T-cell (primary cell): ENCODE measurements at regions of chr9 and their contacts with region 1.

Region 1: GRCh38 chr9:125308683-125309082 is 47.1 kb downstream of the GAPVD1 start:
- DNase-seq: no peak
- ATAC-seq: no peak
- H3K4me3 ChIP-seq: no peak overlapping the region
- H3K4me3 Mint-ChIP-seq: no peak overlapping the region
- H3K27ac ChIP-seq: no peak overlapping the region
- H3K27ac Mint-ChIP-seq: no peak overlapping the region
- H3K4me1 ChIP-seq: no peaks in the 10 kb centered on the region
- H3K4me1 Mint-ChIP-seq: peaks cover 0 to 4% (median 0%) of the 10 kb centered on the region in 3 donors
- H3K27me3 ChIP-seq: no peaks in the 10 kb centered on the region
- H3K27me3 Mint-ChIP-seq: no peaks in the 10 kb centered on the region

Region 2: GRCh38 chr9:125648294-125648693 is 339.6 kb after region 1 on chr9:
- CTCF ChIA-PET with region 1: no interaction called
- POLR2A ChIA-PET with region 1: interaction called in 1 of 2 experiments, 11 read pairs
- DNase-seq: no peak
- ATAC-seq: no peak
- H3K4me3 ChIP-seq: no peak overlapping the region
- H3K4me3 Mint-ChIP-seq: peak overlapping the region in 1 of 3 donors; percentile 30
- H3K27ac ChIP-seq: no peak overlapping the region
- H3K27ac Mint-ChIP-seq: peak overlapping the region in 1 of 2 donors; percentile 20
- H3K4me1 ChIP-seq: peaks cover 18% of the 10 kb centered on the region in 2 experiments
- H3K4me1 Mint-ChIP-seq: peaks cover 66 to 77% (median 72%) of the 10 kb centered on the region in 3 donors
- H3K27me3 ChIP-seq: no peaks in the 10 kb centered on the region
- H3K27me3 Mint-ChIP-seq: no peaks in the 10 kb centered on the region